H1 (cell line): ENCODE measurements at regions of chr3 and their contacts with region 1.

Region 1: DNA sequence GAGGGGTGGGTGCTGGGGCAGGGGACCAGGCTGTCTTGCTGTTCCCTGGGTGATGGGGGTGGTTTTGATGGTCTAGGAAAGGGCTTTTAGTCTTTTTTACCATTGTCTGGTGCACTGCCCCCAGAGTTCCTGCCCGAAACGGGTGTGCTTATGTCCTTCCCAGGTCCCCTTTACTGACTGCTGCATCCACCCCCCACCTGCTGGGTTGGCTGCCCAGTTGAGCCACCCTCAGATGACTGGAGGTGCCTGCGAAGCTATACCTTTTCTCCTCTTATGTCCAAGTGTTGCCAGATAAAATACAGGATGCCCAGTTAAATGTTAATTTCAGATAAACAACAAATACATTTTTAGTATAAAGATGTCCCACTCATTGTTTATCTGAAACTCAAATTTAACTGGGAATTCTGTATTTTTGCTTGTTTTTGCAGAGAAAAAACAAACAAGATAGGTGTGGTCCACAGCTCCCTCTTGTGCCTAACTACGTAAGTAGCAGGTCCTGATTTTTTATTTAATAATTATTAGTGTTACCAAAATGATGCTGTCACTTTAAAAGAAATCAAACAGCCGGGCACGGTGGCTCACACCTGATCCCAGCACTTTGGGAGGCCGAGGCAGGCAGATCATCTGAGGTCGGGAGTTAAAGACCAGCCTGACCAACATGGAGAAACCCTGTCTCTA is 6.1 kb upstream of the RPP14 start:
- DNase-seq: peak in 1 of 2 experiments; percentile 53
- H3K4me3 ChIP-seq: no peak overlapping the region
- H3K27ac ChIP-seq: no peak overlapping the region
- H3K4me1 ChIP-seq: peaks cover 0 to 3% (median 0%) of the 10 kb centered on the region in 4 experiments; a peak in 1 of 7 replicates
- H3K27me3 ChIP-seq: no peaks in the 10 kb centered on the region; a peak in 1 of 7 replicates
- CTCF ChIP-seq: peak in 2 of 3 experiments; percentile 42 to 44; a peak in 2 of 4 replicates
- EP300 ChIP-seq: no peak
- POLR2A ChIP-seq: no peak
- RAD21 ChIP-seq: peak; percentile 68 to 76

Region 2: DNA sequence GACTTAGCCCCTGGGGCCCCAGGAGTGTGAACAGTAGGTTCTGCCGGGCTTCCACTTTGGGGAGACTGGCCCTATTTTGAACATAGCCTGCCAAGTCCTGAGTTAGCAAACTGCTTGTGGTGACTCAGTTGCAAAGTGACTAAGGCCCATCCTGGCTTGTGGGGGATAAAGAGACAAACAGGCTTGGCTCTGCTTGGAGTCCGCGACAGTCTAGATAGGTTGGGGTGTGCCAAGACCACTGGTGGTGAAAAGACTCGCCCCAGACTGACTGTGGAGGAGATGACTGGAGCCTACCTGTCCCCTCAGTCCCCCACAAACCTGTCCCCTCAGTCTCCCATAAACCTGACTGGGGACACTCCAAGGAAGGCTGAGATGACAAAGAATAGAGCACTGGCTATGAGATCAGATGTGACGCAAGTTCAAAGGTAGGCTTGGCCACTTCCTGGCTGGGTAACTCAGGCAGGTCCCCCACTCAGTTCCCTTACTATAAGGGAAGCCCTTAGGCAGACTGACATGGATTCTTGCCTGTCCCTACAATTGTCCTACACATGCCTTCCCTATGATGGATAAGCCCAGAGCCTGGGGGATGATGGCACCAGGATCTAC is 93.5 kb before region 1 on chr3:
- CTCF ChIA-PET with region 1: interaction called, 12 read pairs
- POLR2A ChIA-PET with region 1: no interaction called
- DNase-seq: no peak
- H3K4me3 ChIP-seq: no peak overlapping the region
- H3K27ac ChIP-seq: no peak overlapping the region
- H3K4me1 ChIP-seq: no peaks in the 10 kb centered on the region
- H3K27me3 ChIP-seq: peaks cover 0 to 3% (median 0%) of the 10 kb centered on the region in 4 experiments; a peak in 1 of 7 replicates
- CTCF ChIP-seq: no peak
- EP300 ChIP-seq: no peak
- POLR2A ChIP-seq: no peak
- RAD21 ChIP-seq: no peak